ENCODE measurements at regions of chr15 and their contacts with region 1.

Region 1: GRCh38 chr15:68025835-68026424 is 28.2 kb upstream of the PIAS1 start:
- DNase-seq: no peak
- H3K4me3 ChIP-seq: no peak overlapping the region
- H3K27ac ChIP-seq: no peak overlapping the region
- H3K4me1 ChIP-seq: no peaks in the 10 kb centered on the region
- H3K27me3 ChIP-seq: no peaks in the 10 kb centered on the region
- CTCF ChIP-seq: no peak

Region 2: GRCh38 chr15:67601073-67601472 is 424.9 kb before region 1 on chr15:
- intact Hi-C with region 1: no loop called
- DNase-seq: no peak
- H3K4me3 ChIP-seq: no peak overlapping the region
- H3K27ac ChIP-seq: no peak overlapping the region
- H3K4me1 ChIP-seq: no peaks in the 10 kb centered on the region
- H3K27me3 ChIP-seq: no peaks in the 10 kb centered on the region
- CTCF ChIP-seq: no peak

Region 3: DNA sequence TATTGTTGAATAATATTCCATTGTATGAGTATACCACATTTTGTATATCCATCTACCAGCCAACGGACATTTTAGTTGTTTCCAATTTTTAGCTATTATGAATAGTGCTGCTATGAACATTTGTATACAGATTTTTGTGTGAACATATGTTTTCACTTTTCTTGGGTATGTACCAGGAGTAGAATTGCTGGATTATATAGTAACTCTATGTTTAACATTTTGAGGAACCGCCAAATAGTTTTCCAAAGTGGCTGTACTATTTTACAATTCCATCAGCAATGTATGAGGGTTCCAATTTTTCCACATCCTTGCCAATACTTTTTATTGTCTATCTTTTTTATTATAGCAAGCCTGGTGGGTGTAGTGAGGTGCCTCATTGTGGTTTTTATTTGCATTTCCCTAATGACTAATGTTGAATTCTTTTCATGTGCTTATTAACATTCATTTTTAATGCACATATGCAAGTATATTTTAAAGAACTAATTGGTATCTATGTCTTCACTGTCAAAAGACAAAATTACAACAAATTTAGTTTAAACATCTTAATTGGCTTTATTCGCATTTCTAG is 49.3 kb before region 1 on chr15:
- intact Hi-C with region 1: loop called (anchors 10 kb)
- DNase-seq: no peak
- H3K4me3 ChIP-seq: no peak overlapping the region
- H3K27ac ChIP-seq: no peak overlapping the region
- H3K4me1 ChIP-seq: no peaks in the 10 kb centered on the region
- H3K27me3 ChIP-seq: no peaks in the 10 kb centered on the region
- CTCF ChIP-seq: no peak